ENCODE measurements at regions of chr19 and their contacts with region 1.

Region 1: DNA sequence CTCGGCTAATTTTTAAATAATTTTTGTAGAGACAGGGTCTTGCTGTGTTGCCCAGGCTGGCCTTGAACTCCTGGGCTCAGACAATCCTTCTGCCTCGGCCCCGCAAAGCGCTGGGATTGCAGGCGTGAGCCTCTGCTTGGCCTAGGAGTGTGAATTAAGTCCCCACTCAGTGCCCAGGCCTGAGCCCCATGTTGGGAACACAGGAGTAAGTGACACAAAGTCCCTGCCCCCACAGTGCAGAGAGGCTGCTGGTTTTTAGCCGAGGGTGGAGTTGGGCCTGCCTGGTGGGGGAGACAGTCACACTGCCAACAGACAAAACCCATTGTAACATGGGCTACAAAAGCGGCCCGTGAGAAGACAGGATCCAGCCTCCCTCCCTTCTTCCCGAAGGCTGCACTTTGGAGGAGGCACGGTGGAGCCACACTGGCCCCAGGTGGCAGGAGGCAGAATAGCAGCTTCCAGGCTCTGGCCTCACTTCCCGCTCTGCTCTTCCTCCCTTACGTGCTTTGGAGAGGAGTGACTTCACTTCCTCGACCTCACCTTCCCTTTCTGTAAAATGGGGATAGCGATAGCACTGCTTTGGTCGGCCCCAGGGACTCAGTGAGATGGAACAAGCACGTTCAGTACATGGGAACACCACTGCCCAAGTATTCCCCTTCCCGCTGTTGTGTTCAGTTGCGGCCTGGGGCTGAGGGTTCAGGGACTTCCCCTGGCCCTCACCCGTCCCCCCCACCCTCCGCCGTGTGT is 15.2 kb upstream of the EHD2 start:
- DNase-seq: peak; percentile 46 to 54 (median 51)
- H3K4me3 ChIP-seq: no peak overlapping the region
- H3K4me3 Mint-ChIP-seq: no peak overlapping the region
- H3K27ac ChIP-seq: no peak overlapping the region
- H3K27ac Mint-ChIP-seq: no peak overlapping the region
- H3K4me1 ChIP-seq: no peaks in the 10 kb centered on the region
- H3K4me1 Mint-ChIP-seq: peaks cover 0 to 4% (median 2%) of the 10 kb centered on the region in 4 donors
- H3K27me3 ChIP-seq: no peaks in the 10 kb centered on the region
- H3K27me3 Mint-ChIP-seq: no peaks in the 10 kb centered on the region

Region 2: DNA sequence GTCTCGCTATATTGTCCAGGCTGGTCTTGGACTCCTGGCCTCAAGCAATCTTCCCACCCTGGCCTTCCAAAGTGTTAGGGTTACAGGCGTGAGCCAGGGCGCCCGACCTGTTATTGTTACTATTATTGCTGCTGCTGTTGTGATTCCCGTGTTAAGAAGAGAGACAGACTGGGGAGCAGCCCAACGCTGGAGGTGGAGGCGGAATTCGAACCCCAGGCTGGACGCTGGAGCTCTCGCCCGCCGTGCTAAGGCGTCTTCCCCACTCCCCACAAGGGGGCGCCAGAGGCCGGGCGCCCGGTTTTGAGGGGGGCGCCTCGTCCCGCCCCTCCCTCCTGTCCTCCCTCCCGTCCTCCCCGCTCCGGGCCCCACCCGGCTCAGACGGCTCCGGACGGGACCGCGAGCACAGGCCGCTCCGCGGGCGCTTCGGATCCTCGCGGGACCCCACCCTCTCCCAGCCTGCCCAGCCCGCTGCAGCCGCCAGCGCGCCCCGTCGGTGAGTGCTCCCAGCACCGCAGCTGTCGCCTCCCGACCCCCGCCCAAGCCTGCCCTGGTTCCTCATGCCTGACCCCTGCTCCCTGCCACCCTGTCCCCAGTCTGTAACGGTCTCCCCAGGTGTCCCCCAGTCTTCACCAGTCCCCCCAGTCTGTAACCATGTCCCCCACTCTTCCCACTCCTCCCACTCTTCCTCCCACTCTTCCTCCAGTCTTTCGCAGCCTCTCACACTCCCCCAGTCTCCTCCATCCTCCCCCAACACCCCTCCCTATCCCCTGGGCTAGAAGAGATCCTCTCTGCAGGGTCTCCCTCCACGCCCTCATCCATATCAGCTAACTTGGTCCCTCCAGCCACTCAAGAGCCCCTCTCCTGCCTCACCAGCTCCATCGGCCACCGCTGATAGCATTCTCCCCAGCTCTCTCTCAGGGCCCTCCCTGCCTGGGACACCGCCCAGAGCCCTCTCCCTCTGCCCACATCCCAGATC is 15.3 kb after region 1 on chr19 and contains the start of gene EHD2:
- CTCF ChIA-PET with region 1: interaction called, 11 read pairs
- POLR2A ChIA-PET with region 1: no interaction called
- intact Hi-C with region 1: no loop called
- DNase-seq: peak in 4 of 5 donors; percentile 11 to 34 (median 21)
- H3K4me3 ChIP-seq: no peak within 1 kb of the TSS
- H3K4me3 Mint-ChIP-seq: peak within 1 kb of the TSS in 3 of 8 donors; percentile 6 to 61 (median 43)
- H3K27ac ChIP-seq: no peak within 1 kb of the TSS
- H3K27ac Mint-ChIP-seq: no peak within 1 kb of the TSS
- H3K4me1 ChIP-seq: peaks cover 4% of the 10 kb centered on the region
- H3K4me1 Mint-ChIP-seq: peaks cover 0 to 3% (median 2%) of the 10 kb centered on the region in 4 donors
- H3K27me3 ChIP-seq: no peaks in the 10 kb centered on the region
- H3K27me3 Mint-ChIP-seq: peaks cover 28 to 31% of the 10 kb centered on the region in 2 donors
- total RNA-seq, gene EHD2: not detected